Dendritic cell treated with granulocyte-macrophage colony-stimulating factor and Interleukin-4, amounts not matched to agents 40 ng/mL and 50 ng/mL, for 4 days (primary cell): ENCODE measurements at regions of chr7 and their contacts with region 1.

Region 1: DNA sequence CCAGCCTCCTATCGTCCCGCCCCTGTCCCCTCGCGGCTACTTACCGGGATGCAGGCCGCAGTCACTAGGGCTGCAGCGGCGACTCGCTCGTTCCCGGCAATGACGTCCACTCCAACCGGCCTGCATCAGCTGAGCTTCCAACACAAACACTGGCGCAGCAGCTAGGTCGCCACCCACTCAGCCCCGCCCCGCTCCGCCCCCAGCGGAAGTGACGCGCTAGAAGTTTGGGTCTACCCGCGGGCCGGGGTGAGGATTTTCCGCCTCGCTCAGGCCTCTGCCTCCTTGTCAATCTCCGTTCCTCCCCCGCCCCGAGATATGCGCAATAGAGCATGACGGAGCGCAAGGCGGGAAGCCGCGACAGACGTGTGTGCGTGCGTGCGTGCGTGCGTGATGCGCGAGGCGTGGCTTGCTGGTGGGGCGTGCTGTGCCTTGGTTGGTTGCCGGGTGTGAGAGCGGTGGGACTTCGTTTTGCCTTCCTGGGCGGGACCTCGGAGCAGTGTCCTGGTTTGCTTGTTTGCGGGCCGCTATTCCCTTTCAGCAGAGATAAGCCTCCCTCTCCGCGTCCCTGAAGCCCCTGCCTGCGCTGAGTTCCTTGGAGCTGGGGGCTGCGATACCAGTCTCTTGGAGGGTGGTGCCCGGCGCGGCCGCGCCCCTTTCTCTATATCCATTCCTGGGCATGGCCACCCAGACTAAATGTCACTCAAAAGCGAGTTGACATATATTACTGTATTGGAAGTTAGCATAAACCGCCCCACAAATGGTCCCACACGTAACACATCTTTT is at the start of gene PNPLA8:
- H3K4me3 Mint-ChIP-seq: peak within 1 kb of the TSS; percentile 90
- H3K27ac Mint-ChIP-seq: peak within 1 kb of the TSS; percentile 98
- H3K4me1 Mint-ChIP-seq: peaks cover 26% of the 10 kb centered on the region
- H3K27me3 Mint-ChIP-seq: no peaks in the 10 kb centered on the region

Region 2: DNA sequence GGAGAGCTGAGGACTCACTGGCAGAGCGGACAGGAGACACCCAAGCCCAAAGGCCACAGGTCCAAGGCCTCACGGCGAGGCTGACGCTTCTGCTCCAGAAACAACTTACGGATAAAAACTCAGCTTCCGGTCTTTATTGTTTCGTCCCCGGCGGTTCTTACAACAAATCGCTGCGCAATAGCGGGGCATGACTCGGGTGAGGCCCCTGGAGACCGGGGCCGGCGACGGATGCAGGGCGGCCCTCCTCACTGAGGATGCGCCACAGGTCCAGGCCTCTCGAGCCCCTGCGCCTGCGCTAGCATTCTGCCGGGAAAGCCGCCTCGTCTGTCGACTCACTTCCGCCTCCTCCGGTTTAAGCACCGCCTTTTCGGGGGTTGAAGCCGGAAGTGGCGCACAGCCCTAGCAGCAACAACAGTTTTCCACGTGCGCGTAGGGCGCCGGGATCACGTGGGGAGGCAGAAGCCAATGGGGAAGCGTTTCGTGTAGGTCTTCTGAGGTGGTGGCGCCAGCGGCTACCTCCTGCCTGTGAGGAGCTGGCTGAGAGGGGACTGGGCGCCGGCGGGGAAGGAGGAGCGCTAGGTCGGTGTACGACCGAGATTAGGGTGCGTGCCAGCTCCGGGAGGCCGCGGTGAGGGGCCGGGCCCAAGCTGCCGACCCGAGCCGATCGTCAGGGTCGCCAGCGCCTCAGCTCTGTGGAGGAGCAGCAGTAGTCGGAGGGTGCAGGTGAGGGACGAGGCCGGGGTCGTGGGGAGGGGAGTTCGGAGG is 43.4 kb after region 1 on chr7 and contains the starts of genes DNAJB9 and THAP5:
- intact Hi-C with region 1: loop called (anchors 1 kb)
- H3K4me3 Mint-ChIP-seq: peak within 1 kb of the TSS; percentile 98
- H3K27ac Mint-ChIP-seq: peak within 1 kb of the TSS; percentile 98
- H3K4me1 Mint-ChIP-seq: peaks cover 5% of the 10 kb centered on the region
- H3K27me3 Mint-ChIP-seq: no peaks in the 10 kb centered on the region

Region 3: GRCh38 chr7:108629651-108630400 is 103.7 kb after region 1 on chr7:
- intact Hi-C with region 1: no loop called
- H3K4me3 Mint-ChIP-seq: no peak overlapping the region
- H3K27ac Mint-ChIP-seq: no peak overlapping the region
- H3K4me1 Mint-ChIP-seq: no peaks in the 10 kb centered on the region
- H3K27me3 Mint-ChIP-seq: no peaks in the 10 kb centered on the region